ENCODE measurements at regions of chr15 and their contacts with region 1.

Region 1: DNA sequence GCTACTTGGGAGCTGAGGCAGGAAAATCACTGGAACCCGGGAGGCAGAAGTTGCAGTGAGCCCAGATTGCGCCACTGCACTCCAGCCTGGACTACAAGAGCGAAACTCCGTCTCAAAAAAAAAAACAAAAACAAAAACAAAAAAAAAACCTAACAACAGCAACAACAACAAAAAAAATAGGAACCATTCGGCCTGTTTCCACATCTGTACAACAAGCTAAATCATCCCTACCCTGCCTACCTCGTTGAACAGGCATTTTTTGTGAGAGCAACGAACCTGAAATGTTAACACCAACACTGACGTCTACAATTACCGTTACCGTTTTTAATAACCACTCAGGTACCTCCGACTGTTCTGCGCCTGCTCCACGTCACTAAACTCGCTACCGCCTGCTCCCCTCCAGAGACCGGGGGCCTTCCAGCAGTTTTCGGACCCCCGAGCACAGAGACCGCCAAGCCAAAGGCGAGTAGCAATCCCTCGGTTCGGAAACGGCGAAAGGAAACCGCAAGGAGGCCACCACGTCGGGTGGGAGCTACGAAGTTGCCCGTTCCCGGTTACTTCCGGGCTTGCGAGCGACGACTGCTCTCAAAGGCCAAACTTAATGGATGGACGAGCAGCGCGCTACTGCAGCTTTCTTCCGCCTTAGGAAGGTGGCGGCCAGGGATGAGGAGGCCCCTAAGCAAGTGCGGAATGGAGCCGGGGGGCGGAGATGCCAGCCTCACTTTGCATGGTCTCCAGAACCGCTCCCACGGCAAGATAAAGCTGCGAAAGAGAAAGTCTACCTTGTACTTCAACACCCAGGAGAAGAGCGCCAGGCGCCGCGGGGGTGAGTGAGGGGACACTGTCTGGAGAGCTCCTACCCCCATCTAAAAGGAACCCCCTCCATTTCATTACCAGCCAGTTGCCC is at the starts of genes PIGB and PIGBOS1:
- DNase-seq: peak; percentile 82
- H3K4me3 Mint-ChIP-seq: peak within 1 kb of the TSS; percentile 100
- H3K27ac Mint-ChIP-seq: peak within 1 kb of the TSS; percentile 98
- H3K4me1 Mint-ChIP-seq: peaks cover 52% of the 10 kb centered on the region
- H3K27me3 Mint-ChIP-seq: no peaks in the 10 kb centered on the region
- total RNA-seq, gene PIGB: 19.7 and 21.0 TPM in 2 replicates
- total RNA-seq, gene PIGBOS1: 9.5 and 12.3 TPM in 2 replicates

Region 2: GRCh38 chr15:55196458-55197361 is 122.1 kb before region 1 on chr15 and contains the start of gene RSL24D1:
- intact Hi-C with region 1: loop called (anchors 1 kb)
- DNase-seq: peak; percentile 95
- H3K4me3 Mint-ChIP-seq: no peak within 1 kb of the TSS
- H3K27ac Mint-ChIP-seq: no peak within 1 kb of the TSS
- H3K4me1 Mint-ChIP-seq: peaks cover 20% of the 10 kb centered on the region
- H3K27me3 Mint-ChIP-seq: no peaks in the 10 kb centered on the region
- total RNA-seq, gene RSL24D1: 94.0 and 97.0 TPM in 2 replicates

Region 3: GRCh38 chr15:55290528-55291057 is 28.2 kb before region 1 on chr15:
- intact Hi-C with region 1: loop called (anchors 2 kb)
- DNase-seq: peak; percentile 77
- H3K4me3 Mint-ChIP-seq: peak overlapping the region; percentile 78
- H3K27ac Mint-ChIP-seq: peak overlapping the region; percentile 83
- H3K4me1 Mint-ChIP-seq: peaks cover 31% of the 10 kb centered on the region
- H3K27me3 Mint-ChIP-seq: no peaks in the 10 kb centered on the region

Region 4: GRCh38 chr15:55372701-55373440 is 54.0 kb after region 1 on chr15:
- intact Hi-C with region 1: loop called (anchors 2 kb)
- DNase-seq: no peak
- H3K4me3 Mint-ChIP-seq: no peak overlapping the region
- H3K27ac Mint-ChIP-seq: no peak overlapping the region
- H3K4me1 Mint-ChIP-seq: peaks cover 6% of the 10 kb centered on the region
- H3K27me3 Mint-ChIP-seq: no peaks in the 10 kb centered on the region

Region 5: DNA sequence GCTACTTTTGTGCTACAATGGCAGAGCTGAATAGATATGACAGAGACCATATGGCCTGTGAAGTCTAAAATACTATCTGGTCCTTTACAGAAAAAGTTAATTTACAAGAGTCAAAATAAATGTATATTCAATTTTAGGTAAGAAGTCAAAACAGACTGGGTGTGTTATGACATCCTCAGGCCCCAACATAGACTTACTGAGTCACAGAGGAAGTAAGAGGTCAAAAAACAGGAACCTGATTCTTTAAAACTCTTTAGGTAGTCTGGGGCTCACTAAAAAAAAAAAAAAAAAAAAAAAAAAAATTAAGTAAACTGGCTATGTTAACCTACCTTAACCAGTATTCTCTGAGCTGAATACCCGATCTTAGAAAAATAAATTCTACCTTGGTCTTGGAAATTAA is 176.1 kb after region 1 on chr15:
- intact Hi-C with region 1: loop called (anchors 5 kb)
- DNase-seq: no peak
- H3K4me3 Mint-ChIP-seq: no peak overlapping the region
- H3K27ac Mint-ChIP-seq: no peak overlapping the region
- H3K4me1 Mint-ChIP-seq: peaks cover 5% of the 10 kb centered on the region
- H3K27me3 Mint-ChIP-seq: no peaks in the 10 kb centered on the region